PC-3 (cell line): ENCODE measurements at regions of chr3 and their contacts with region 1.

Region 1: DNA sequence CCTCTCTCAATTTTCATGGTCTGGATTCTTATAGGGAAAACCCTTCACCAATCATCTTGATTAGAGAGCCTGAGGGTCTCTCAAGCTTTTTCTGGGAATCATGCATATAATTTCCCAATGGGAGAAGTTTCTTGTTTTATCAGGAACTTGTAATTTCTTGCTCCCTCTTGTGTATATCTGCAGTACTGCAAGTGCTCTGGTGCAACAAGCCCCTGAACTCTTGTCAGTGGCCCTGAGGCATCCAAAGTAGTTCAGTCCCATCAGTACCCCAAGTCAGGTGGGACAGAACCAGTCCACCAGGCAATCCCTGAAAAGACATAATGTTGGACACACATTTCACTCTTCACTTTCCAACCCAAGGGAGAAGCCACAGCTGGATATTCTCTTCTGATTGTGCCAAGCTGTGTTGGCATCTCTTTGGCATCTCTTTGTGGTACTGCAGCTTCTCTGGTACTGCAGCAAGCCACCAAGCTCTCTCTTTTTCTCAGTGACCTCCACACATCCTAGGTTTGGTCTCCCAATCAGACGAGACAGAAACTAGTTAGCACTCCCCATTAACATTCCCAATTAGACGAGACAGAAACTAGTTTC is 214.5 kb downstream of the ZIC4 start:
- DNase-seq: peak; percentile 82
- ATAC-seq: peak; percentile 63; the same call in 1 of the 2 replicates
- H3K4me3 ChIP-seq: no peak overlapping the region
- H3K27ac ChIP-seq: no peak overlapping the region
- H3K4me1 ChIP-seq: no peaks in the 10 kb centered on the region
- H3K27me3 ChIP-seq: no peaks in the 10 kb centered on the region
- CTCF ChIP-seq: peak; percentile 85

Region 2: DNA sequence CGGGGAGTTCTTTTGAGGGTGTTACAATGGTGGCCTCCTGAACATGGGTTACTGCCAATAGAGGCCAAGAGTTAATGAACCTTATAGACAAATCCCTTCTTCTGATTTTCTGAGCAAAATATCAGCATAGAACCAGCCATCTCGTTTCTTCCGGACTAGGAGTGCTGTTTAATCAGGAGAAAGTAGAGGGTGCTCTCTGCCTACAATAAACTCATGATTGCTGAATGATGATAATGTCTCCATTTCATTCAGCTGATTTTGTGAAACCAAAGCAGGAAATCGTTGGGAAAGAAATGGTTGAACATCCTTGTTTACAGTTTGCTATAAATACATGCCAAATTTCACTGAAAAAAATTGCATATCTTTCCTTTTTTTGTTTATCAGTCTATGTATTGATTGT is 444.0 kb before region 1 on chr3:
- CTCF ChIA-PET with region 1: no interaction called
- POLR2A ChIA-PET with region 1: no interaction called
- intact Hi-C with region 1: loop called (anchors 2 kb)
- DNase-seq: peak; percentile 46
- ATAC-seq: peak; percentile 25
- H3K4me3 ChIP-seq: peak overlapping the region; percentile 24
- H3K27ac ChIP-seq: peak overlapping the region; percentile 77
- H3K4me1 ChIP-seq: peaks cover 32% of the 10 kb centered on the region
- H3K27me3 ChIP-seq: no peaks in the 10 kb centered on the region
- CTCF ChIP-seq: peak; percentile 47

Region 3: DNA sequence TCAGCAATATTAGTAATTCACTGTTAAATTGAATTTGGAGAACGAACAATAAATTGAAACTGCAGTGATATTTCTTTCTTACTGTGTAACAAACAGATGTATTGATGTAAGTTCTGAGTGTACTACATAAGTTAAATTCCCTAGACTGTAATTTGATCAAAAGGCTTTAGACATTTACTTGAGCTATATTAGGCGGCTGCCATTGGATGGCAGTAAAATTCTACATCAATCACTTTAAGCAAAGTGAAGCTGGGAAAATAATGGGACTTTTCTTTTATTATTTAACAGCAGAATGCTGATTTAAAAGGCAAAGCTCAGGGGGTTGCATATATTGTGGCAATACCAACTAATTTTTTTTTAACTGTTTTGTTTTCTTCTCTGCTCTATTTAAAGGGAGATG is 374.2 kb before region 1 on chr3:
- CTCF ChIA-PET with region 1: interaction called, 6 read pairs
- POLR2A ChIA-PET with region 1: no interaction called
- intact Hi-C with region 1: loop called (anchors 1 kb)
- DNase-seq: peak; percentile 63
- ATAC-seq: peak; percentile 78
- H3K4me3 ChIP-seq: no peak overlapping the region
- H3K27ac ChIP-seq: no peak overlapping the region
- H3K4me1 ChIP-seq: no peaks in the 10 kb centered on the region
- H3K27me3 ChIP-seq: peaks cover 39% of the 10 kb centered on the region
- CTCF ChIP-seq: peak; percentile 71

Region 4: GRCh38 chr3:147119989-147120388 is 71.9 kb before region 1 on chr3:
- CTCF ChIA-PET with region 1: no interaction called
- POLR2A ChIA-PET with region 1: no interaction called
- intact Hi-C with region 1: loop called (anchors 1 kb)
- DNase-seq: peak; percentile 40
- ATAC-seq: no peak
- H3K4me3 ChIP-seq: no peak overlapping the region
- H3K27ac ChIP-seq: no peak overlapping the region
- H3K4me1 ChIP-seq: no peaks in the 10 kb centered on the region
- H3K27me3 ChIP-seq: 0 out of 2 replicates have a peak, but pooled peaks cover 5% of the 10 kb centered on the region
- CTCF ChIP-seq: peak; percentile 70